Activated CD4-positive, alpha-beta T cell treated with anti-CD3 and anti-CD28 coated beads for 36 hours (primary cell): ENCODE measurements at regions of chr5 and their contacts with region 1.

Region 1: GRCh38 chr5:151252762-151253604 is at the start of gene GM2A:
- DNase-seq: peak; percentile 99
- ATAC-seq: peak; percentile 94
- H3K4me3 Mint-ChIP-seq: peak within 1 kb of the TSS; percentile 85
- H3K27ac Mint-ChIP-seq: peak within 1 kb of the TSS; percentile 90
- H3K4me1 Mint-ChIP-seq: peaks cover 38% of the 10 kb centered on the region
- H3K27me3 Mint-ChIP-seq: no peaks in the 10 kb centered on the region
- total RNA-seq, gene GM2A: 17.2 to 19.3 TPM

Region 2: DNA sequence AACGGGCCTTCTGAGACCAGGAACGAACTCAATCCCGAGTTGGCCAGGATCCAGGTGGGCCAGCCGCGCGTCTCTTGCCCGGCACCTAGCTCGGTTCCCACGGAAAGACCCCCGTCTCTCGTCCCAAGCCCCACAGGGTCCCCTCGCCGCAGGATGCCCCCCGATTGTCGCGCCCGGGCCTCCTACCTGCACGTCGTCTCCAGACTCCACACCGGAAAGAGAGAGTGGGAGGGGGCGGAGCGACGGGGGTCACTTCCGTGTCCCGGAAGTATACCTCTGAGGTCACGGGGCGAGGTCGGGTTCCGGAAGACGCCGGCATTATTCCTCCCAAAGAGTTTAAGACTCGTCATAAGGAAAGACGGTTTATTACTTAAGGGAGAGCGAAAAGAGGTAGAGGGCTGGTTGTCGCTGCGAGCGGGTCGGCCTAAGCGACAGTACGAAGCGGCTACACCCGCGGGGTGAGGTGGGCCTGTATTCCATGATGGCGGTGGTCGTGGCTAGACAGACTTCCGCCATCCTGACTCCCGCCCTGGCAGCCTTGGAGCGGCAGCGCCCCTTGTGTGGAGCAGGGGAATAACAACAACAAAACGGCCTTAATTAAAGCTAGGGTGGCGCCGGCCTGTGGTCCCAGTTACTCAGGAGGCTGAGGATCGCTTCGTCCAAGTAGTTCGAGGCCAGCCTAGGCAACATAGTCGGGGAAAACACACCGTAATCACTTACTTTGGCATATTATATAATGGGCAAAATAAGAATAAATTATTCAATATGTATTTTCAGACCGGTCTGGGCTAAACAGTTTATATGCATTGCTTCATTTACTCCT is 803.3 kb before region 1 on chr5 and contains the start of gene RPS14:
- CTCF ChIA-PET with region 1: no interaction called
- POLR2A ChIA-PET with region 1: interaction called, 3 read pairs
- intact Hi-C with region 1: loop called in 1 of 2 experiments (anchors 2 kb)
- DNase-seq: peak; percentile 96
- ATAC-seq: peak; percentile 93
- H3K4me3 Mint-ChIP-seq: peak within 1 kb of the TSS; percentile 95
- H3K27ac Mint-ChIP-seq: peak within 1 kb of the TSS; percentile 99
- H3K4me1 Mint-ChIP-seq: peaks cover 31% of the 10 kb centered on the region
- H3K27me3 Mint-ChIP-seq: no peaks in the 10 kb centered on the region
- total RNA-seq, gene RPS14: 2,270 to 3,312 TPM

Region 3: DNA sequence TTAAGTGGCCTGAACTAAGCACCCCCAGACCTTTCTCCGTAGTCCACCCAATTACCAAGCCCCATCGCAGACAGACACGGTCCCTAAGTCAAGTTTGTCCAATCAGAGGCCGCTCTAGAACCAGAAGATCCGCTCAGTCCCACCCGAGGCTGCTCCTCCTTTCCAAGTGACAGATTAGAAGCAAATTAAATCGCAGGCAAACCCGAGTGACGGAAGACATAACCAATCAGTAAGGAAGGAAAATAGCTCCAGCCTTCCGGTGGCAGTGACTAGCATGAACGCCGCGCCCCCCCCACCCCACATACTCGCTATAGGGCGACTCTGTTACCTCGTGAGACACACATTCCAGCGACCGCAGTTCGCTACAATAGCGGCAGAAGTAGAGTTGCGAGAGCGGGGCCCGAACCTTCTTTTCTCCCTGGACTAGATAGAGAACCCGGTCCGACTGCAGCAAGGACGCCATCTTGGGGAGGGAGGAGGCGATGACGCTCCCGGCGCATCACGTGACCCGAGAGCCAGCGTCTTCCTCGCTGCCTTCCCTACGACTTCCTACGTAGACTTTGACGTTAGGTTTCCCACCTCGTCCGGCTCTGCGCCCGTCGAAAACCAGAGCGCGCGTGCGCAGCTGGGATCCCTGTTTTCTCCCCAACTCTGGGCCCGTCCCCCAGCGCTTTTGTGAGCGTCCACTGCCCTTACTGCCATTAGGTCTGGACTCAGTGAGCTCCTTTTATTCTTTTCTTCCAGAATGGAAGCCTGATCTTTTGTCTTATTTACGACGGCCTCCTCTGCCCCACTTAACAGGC is 494.3 kb before region 1 on chr5 and contains the start of gene DCTN4:
- CTCF ChIA-PET with region 1: interaction called, 4 read pairs
- POLR2A ChIA-PET with region 1: no interaction called
- intact Hi-C with region 1: loop called in 1 of 2 experiments (anchors 2 kb)
- DNase-seq: peak; percentile 96
- ATAC-seq: peak; percentile 96
- H3K4me3 Mint-ChIP-seq: no peak within 1 kb of the TSS
- H3K27ac Mint-ChIP-seq: no peak within 1 kb of the TSS
- H3K4me1 Mint-ChIP-seq: peaks cover 37% of the 10 kb centered on the region
- H3K27me3 Mint-ChIP-seq: no peaks in the 10 kb centered on the region
- total RNA-seq, gene DCTN4: 31.7 to 49.0 TPM

Region 4: GRCh38 chr5:151213800-151214613 is 39.0 kb before region 1 on chr5:
- CTCF ChIA-PET with region 1: interaction called, 4 read pairs
- POLR2A ChIA-PET with region 1: interaction called, 12 read pairs
- intact Hi-C with region 1: loop called (anchors 1 to 2 kb)
- DNase-seq: peak; percentile 92
- ATAC-seq: peak; percentile 89
- H3K4me3 Mint-ChIP-seq: peak overlapping the region; percentile 74
- H3K27ac Mint-ChIP-seq: peak overlapping the region; percentile 97
- H3K4me1 Mint-ChIP-seq: peaks cover 83% of the 10 kb centered on the region
- H3K27me3 Mint-ChIP-seq: no peaks in the 10 kb centered on the region

Region 5: GRCh38 chr5:151264113-151264512 is 11.1 kb after region 1 on chr5:
- CTCF ChIA-PET with region 1: interaction called, 3 read pairs
- POLR2A ChIA-PET with region 1: no interaction called
- intact Hi-C with region 1: loop called in 1 of 2 experiments (anchors 1 kb)
- DNase-seq: peak; percentile 61
- ATAC-seq: peak; percentile 97
- H3K4me3 Mint-ChIP-seq: no peak overlapping the region
- H3K27ac Mint-ChIP-seq: peak overlapping the region; percentile 86
- H3K4me1 Mint-ChIP-seq: peaks cover 13% of the 10 kb centered on the region
- H3K27me3 Mint-ChIP-seq: no peaks in the 10 kb centered on the region

Region 6: GRCh38 chr5:151758430-151759241 is 505.7 kb after region 1 on chr5 and contains the start of gene ATOX1:
- CTCF ChIA-PET with region 1: no interaction called
- POLR2A ChIA-PET with region 1: no interaction called
- intact Hi-C with region 1: loop called in 1 of 2 experiments (anchors 1 kb)
- DNase-seq: peak; percentile 95
- ATAC-seq: peak; percentile 99
- H3K4me3 Mint-ChIP-seq: peak within 1 kb of the TSS; percentile 98
- H3K27ac Mint-ChIP-seq: peak within 1 kb of the TSS; percentile 98
- H3K4me1 Mint-ChIP-seq: peaks cover 33% of the 10 kb centered on the region
- H3K27me3 Mint-ChIP-seq: no peaks in the 10 kb centered on the region
- total RNA-seq, gene ATOX1: 74.8 to 85.9 TPM